ENCODE measurements at regions of chr1 and their contacts with region 1.

Region 1: GRCh38 chr1:169091480-169091941 is 15.0 kb upstream of the ATP1B1 start:
- DNase-seq: no peak
- ATAC-seq: no peak
- H3K4me3 ChIP-seq: no peak overlapping the region
- H3K4me3 Mint-ChIP-seq: no peak overlapping the region
- H3K27ac ChIP-seq: no peak overlapping the region
- H3K27ac Mint-ChIP-seq: no peak overlapping the region
- H3K4me1 ChIP-seq: peaks cover 0 to 6% of the 10 kb centered on the region in 2 donors
- H3K4me1 Mint-ChIP-seq: peaks cover 0 to 16% (median 9%) of the 10 kb centered on the region in 7 donors
- H3K27me3 ChIP-seq: no peaks in the 10 kb centered on the region
- H3K27me3 Mint-ChIP-seq: peaks cover 0 to 12% (median 4%) of the 10 kb centered on the region in 5 donors

Region 2: GRCh38 chr1:169044296-169044695 is 47.2 kb before region 1 on chr1:
- CTCF ChIA-PET with region 1: no interaction called
- POLR2A ChIA-PET with region 1: no interaction called
- intact Hi-C with region 1: loop called in 1 of 2 experiments (anchors 5 kb)
- DNase-seq: peak in 8 of 9 donors; percentile 10 to 65 (median 56)
- ATAC-seq: peak; percentile 93
- H3K4me3 ChIP-seq: peak overlapping the region; percentile 0
- H3K4me3 Mint-ChIP-seq: peak overlapping the region; percentile 59 to 84 (median 72)
- H3K27ac ChIP-seq: no peak overlapping the region
- H3K27ac Mint-ChIP-seq: peak overlapping the region; percentile 16 to 85 (median 73)
- H3K4me1 ChIP-seq: peaks cover 16 to 30% of the 10 kb centered on the region in 2 donors
- H3K4me1 Mint-ChIP-seq: peaks cover 25 to 64% (median 49%) of the 10 kb centered on the region in 7 donors
- H3K27me3 ChIP-seq: no peaks in the 10 kb centered on the region
- H3K27me3 Mint-ChIP-seq: no peaks in the 10 kb centered on the region

Region 3: DNA sequence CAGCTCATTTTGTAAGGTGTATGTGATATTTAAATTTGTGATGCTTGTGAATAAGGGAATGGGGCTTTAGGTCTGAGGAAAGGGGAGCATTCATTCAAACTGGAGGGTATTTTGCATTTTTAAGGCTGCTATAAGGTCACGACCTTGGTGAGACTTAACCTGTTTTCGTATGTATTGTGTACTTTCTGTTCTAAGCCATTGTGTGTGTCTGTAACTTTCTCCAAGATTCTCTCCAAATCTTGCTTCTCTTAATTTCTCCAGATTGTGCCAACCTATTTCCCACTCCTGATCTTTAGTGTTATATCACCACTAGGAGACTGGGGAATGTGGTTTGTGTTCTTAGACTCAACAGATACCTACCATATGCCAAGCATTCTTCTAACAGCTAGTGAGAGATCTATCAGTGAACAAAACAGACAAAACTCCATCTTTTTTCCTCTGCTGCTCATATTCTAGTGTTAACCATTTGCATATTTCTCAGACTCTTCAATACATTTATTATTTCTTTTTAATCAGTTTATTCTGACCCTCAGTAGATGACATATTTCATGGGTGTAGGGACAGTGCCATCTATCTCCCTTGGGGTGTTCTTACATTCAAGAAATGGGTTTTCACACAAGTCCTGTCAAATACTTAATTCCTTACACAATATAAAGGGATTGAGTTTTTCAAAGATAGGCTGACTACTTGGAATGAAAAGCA is 42.4 kb after region 1 on chr1:
- CTCF ChIA-PET with region 1: no interaction called
- POLR2A ChIA-PET with region 1: no interaction called
- intact Hi-C with region 1: no loop called
- DNase-seq: no peak
- ATAC-seq: no peak
- H3K4me3 ChIP-seq: no peak overlapping the region
- H3K4me3 Mint-ChIP-seq: no peak overlapping the region
- H3K27ac ChIP-seq: no peak overlapping the region
- H3K27ac Mint-ChIP-seq: no peak overlapping the region
- H3K4me1 ChIP-seq: no peaks in the 10 kb centered on the region
- H3K4me1 Mint-ChIP-seq: peaks cover 0 to 8% (median 0%) of the 10 kb centered on the region in 7 donors
- H3K27me3 ChIP-seq: no peaks in the 10 kb centered on the region
- H3K27me3 Mint-ChIP-seq: no peaks in the 10 kb centered on the region